ENCODE measurements at regions of chr7 and their contacts with region 1.

Region 1: DNA sequence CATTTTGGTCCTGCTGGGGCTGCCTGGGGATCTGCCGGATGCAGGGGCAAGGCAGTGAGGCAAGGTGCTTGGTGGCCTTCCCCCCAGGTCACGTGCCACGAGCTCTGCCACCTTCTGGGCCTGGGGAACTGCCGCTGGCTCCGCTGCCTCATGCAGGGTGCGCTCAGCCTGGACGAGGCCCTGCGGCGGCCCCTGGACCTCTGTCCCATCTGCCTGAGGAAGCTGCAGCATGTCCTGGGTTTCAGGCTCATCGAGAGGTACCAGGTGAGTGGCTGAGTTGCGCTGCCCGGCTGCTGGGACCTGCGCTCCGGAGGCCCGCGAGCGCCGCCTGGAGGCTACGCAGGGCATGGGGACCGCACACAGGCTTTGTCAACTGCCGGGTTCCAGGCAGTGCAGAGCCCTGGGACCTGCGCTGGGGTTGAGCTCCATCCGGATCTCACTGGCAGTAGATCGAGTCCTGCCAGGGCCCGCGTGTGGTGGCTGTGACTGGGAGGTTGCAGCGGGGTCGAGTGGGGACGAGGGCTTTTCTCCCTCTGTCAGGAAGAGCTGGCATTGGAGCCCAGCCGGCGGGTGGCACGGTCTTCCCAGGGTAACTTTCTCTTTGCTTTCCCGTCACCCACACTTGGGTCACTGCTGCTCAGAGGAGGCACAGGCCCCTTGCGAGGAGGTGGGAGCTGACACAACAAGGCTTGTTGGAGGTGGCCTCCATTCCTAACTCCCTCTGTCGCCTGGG is 21.7 kb downstream of the AMZ1 start:
- DNase-seq: peak; percentile 91
- ATAC-seq: peak; percentile 74
- H3K4me3 ChIP-seq: peak overlapping the region in 4 of 5 experiments; percentile 44 to 77 (median 60)
- H3K4me3 Mint-ChIP-seq: peak overlapping the region; percentile 92
- H3K27ac ChIP-seq: peak overlapping the region; percentile 93 to 95
- H3K27ac Mint-ChIP-seq: peak overlapping the region; percentile 97
- H3K4me1 ChIP-seq: peaks cover 30 to 45% of the 10 kb centered on the region in 2 donors
- H3K4me1 Mint-ChIP-seq: peaks cover 47% of the 10 kb centered on the region
- H3K27me3 ChIP-seq: no peaks in the 10 kb centered on the region
- H3K27me3 Mint-ChIP-seq: no peaks in the 10 kb centered on the region
- CTCF ChIP-seq: peak; percentile 94

Region 2: DNA sequence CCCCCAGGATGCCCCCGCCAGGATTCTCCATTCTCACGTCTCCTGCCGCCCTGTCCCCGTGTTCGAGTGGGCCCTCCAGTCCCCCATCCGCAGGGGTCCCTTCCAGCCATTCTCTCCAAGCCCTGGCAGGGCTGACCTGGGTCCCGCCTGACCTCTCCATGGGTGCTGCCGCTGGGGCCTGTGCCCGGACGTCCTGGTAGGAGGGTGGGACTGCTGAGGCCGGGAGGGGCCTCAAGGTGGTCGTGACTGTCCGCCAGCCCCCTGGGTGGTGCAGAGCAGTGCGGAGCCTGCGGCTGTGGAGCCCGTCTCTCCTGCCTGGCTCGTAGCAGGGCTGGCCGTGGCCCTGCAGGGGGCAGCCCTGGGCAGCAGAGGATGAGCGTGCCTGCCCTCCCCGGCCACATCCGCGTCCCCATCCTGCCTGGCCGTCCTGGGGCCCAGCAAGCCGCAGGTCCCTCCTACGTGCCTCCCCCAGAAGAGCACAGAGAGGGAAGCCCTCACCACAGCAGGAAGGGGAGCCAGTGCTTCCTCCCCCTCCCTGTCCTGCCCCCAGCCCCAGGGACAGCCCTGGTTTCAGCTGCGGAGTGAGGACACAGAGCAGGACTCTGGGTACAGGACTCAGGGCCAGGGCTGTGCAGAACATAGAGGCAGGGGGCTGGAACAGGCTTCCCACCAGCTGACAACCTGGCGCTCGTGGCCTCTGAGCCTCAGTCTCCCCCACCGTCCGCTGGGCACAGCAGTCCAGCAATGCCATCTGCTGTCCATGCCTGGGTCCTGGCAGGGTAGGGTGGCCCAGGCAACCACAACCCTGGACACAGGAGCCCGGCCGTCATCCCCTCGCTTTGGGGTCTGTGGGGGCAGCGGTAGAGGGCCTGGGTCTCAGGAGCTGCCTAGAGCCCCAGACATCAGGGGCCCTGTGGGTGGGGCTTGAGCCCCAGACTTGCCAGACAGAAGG is 232.0 kb before region 1 on chr7:
- CTCF ChIA-PET with region 1: interaction called, 29 read pairs
- POLR2A ChIA-PET with region 1: no interaction called
- intact Hi-C with region 1: loop called (anchors 1 kb)
- DNase-seq: peak; percentile 78
- ATAC-seq: peak; percentile 99
- H3K4me3 ChIP-seq: peak overlapping the region in 3 of 5 experiments; percentile 5 to 21 (median 12)
- H3K4me3 Mint-ChIP-seq: peak overlapping the region; percentile 47
- H3K27ac ChIP-seq: no peak overlapping the region
- H3K27ac Mint-ChIP-seq: no peak overlapping the region
- H3K4me1 ChIP-seq: peaks cover 14 to 17% of the 10 kb centered on the region in 2 donors
- H3K4me1 Mint-ChIP-seq: peaks cover 12% of the 10 kb centered on the region
- H3K27me3 ChIP-seq: peaks cover 0 to 4% (median 2%) of the 10 kb centered on the region in 4 experiments
- H3K27me3 Mint-ChIP-seq: no peaks in the 10 kb centered on the region
- CTCF ChIP-seq: peak; percentile 72

Region 3: DNA sequence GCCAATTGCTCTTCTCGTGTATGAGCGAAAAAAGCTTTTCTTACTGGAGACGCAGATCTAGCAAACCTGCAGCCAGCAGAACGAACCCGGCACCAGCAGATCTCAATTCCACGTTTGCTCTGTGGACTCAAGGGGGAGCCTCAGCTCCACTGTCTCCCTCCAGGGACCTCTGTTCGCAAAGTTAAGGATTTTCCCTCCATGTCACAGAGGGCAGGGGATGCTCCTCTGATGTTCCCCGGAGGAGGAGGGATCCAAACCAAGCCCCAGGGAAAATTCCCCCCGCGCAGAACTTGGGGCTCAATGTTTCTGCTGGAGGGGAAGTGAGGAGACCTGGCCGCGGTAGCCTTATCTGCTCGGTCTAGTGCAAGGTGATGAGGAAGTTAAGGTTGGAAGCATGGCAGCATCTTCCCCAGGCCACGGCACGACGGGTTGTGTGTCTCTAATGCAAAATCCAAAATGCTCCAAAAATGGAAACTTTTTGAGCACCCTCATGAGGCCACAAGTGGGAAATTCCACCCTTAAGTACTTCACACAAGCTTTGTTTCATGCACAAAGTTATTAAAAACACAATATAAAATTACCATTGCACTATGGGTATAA is 141.9 kb before region 1 on chr7:
- CTCF ChIA-PET with region 1: interaction called, 22 read pairs
- POLR2A ChIA-PET with region 1: no interaction called
- intact Hi-C with region 1: loop called (anchors 1 kb)
- DNase-seq: peak; percentile 54
- ATAC-seq: peak; percentile 62
- H3K4me3 ChIP-seq: peak overlapping the region in 3 of 5 experiments; percentile 1 to 48 (median 22)
- H3K4me3 Mint-ChIP-seq: peak overlapping the region; percentile 55
- H3K27ac ChIP-seq: no peak overlapping the region
- H3K27ac Mint-ChIP-seq: peak overlapping the region; percentile 56
- H3K4me1 ChIP-seq: peaks cover 11 to 16% of the 10 kb centered on the region in 2 donors
- H3K4me1 Mint-ChIP-seq: peaks cover 18% of the 10 kb centered on the region
- H3K27me3 ChIP-seq: no peaks in the 10 kb centered on the region
- H3K27me3 Mint-ChIP-seq: no peaks in the 10 kb centered on the region
- CTCF ChIP-seq: no peak

Region 4: DNA sequence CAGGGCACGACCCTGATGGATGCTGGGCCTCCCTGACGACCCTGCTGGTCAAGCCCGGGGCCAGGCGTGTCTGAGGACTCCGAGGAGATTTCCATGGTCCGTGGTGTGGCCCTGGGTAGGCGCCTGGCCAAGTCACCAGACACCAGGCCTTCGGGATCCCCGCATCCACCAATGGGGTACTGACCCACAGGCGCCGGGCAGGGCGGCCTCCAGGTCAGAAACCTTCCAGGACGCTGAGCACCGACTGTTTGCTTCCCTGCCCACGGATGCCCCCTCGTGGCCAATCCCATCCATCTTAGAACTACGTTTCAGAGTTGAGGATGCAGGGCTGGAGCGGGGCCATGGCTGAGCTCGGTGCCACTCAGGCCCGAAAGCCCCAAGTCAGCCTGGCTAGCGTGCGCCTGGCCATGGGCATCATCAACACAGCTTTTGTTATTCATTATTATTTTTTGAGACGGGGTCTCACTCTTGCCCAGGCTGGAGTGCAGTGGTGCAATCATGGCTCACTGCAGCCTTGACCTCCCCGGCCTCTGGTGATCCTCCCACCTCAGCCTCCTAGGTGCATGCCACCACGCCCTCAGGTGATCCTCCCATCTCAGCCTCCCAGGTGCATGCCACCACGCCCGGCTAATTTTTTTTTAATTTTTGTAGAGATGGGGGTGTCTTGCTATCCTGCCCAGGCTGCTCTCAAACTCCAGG is 28.8 kb before region 1 on chr7:
- CTCF ChIA-PET with region 1: interaction called, 50 read pairs
- POLR2A ChIA-PET with region 1: no interaction called
- intact Hi-C with region 1: no loop called
- DNase-seq: peak; percentile 74
- ATAC-seq: peak; percentile 73
- H3K4me3 ChIP-seq: no peak overlapping the region
- H3K4me3 Mint-ChIP-seq: no peak overlapping the region
- H3K27ac ChIP-seq: no peak overlapping the region
- H3K27ac Mint-ChIP-seq: no peak overlapping the region
- H3K4me1 ChIP-seq: peaks cover 0 to 4% of the 10 kb centered on the region in 2 donors
- H3K4me1 Mint-ChIP-seq: no peaks in the 10 kb centered on the region
- H3K27me3 ChIP-seq: peaks cover 0 to 6% (median under 1%) of the 10 kb centered on the region in 4 experiments
- H3K27me3 Mint-ChIP-seq: peaks cover 12% of the 10 kb centered on the region
- CTCF ChIP-seq: peak; percentile 68

Region 5: DNA sequence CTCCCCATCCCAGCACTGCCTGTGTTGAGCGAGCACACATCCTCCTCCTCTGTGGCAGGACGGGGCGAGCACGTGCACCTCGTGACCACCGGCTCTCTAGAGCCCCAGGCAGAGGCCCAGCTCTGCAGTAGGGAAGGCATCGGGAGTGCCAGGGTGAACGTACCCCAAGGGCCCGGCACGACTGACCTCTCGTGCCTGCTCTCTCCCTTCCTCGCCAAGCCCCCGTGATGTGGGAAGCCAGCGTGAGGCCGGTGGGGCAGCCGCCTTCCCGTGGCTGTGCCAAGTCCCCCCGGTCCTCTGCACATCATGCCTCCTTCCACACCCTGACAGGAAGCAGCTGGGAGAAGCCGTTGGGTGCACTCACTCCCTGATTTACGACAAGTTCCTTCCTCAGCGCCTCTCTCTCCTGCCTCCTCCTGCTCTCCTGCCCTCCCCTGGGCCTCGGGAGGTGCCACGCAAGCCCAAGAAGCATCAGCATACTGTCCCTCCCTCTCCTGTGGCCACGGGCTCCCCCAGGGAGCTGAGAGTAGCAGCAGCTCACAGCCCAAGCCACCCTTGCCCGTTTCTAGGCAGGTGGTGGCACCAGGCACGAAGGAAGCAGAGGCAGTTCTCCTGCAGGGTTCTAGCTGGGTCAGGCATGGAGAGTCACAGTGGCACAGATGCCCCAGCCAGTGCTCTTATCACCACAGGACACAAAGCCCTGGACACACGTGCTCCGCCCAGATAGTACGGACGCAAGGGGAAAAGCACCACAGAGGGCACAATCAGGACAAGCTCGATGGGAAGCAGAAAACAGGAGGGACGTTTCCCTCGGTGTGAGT is 25.2 kb after region 1 on chr7:
- CTCF ChIA-PET with region 1: interaction called, 15 read pairs
- POLR2A ChIA-PET with region 1: interaction called, 5 read pairs
- intact Hi-C with region 1: no loop called
- DNase-seq: peak; percentile 54
- ATAC-seq: peak; percentile 38
- H3K4me3 ChIP-seq: peak overlapping the region in 2 of 5 experiments; percentile 12 to 17
- H3K4me3 Mint-ChIP-seq: peak overlapping the region; percentile 81
- H3K27ac ChIP-seq: no peak overlapping the region
- H3K27ac Mint-ChIP-seq: peak overlapping the region; percentile 76
- H3K4me1 ChIP-seq: peaks cover 41 to 57% of the 10 kb centered on the region in 2 donors
- H3K4me1 Mint-ChIP-seq: peaks cover 56% of the 10 kb centered on the region
- H3K27me3 ChIP-seq: no peaks in the 10 kb centered on the region
- H3K27me3 Mint-ChIP-seq: no peaks in the 10 kb centered on the region
- CTCF ChIP-seq: no peak

Region 6: DNA sequence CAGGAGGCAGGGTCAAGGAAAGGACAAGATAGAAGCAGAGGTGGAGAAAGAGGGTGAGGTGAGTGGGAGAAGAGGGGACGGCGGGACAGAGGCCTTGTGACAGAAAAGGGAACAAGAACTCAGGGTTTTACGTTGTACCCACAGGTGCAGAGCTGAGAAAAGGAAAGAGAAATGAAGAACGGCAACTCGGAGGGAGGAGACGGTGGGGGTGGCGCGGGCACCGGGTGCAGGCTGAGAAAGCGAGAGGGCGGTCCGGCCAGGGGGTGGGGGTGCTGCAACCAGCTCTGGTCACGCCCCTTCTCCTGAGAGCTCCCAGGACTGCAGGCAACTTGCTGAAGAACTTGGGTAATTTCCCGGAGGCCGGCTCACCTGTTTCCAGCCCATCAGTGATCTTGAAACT is 268.7 kb after region 1 on chr7:
- CTCF ChIA-PET with region 1: no interaction called
- POLR2A ChIA-PET with region 1: no interaction called
- intact Hi-C with region 1: loop called (anchors 1 kb)
- DNase-seq: peak; percentile 96
- ATAC-seq: peak; percentile 84
- H3K4me3 ChIP-seq: peak overlapping the region; percentile 46 to 75 (median 63)
- H3K4me3 Mint-ChIP-seq: peak overlapping the region; percentile 98
- H3K27ac ChIP-seq: peak overlapping the region; percentile 77 to 92
- H3K27ac Mint-ChIP-seq: peak overlapping the region; percentile 93
- H3K4me1 ChIP-seq: peaks cover 60 to 83% of the 10 kb centered on the region in 2 donors
- H3K4me1 Mint-ChIP-seq: peaks cover 81% of the 10 kb centered on the region
- H3K27me3 ChIP-seq: no peaks in the 10 kb centered on the region
- H3K27me3 Mint-ChIP-seq: no peaks in the 10 kb centered on the region
- CTCF ChIP-seq: no peak